ENCODE measurements at regions of chrX and their contacts with region 1.

Region 1: GRCh38 chrX:79270401-79270800 is 96.7 kb downstream of the ITM2A start:
- DNase-seq: peak; percentile 21
- CTCF ChIP-seq: peak; percentile 67

Region 2: GRCh38 chrX:78653118-78653822 is 617.1 kb before region 1 on chrX:
- in situ Hi-C with region 1: no loop called
- DNase-seq: no peak
- CTCF ChIP-seq: no peak

Region 3: DNA sequence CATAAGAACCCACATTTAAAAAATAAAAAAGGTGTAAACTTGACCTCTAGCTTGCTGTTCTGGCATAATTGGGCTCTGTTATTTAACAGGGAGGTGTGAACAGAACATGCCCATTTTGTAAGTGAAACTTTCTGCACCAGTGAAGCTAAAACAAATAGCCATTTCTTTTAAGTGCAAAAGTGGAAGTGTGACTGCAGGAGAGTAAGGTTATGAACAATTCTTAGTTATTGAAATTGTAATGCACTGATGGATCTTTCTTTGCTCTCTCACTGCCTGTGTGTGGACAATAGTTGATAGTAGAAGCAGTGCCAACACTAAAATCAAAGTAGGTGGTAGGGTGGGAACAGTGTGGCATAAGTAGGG is 312.7 kb before region 1 on chrX:
- in situ Hi-C with region 1: loop called (anchors 25 kb)
- DNase-seq: no peak
- CTCF ChIP-seq: no peak

Region 4: DNA sequence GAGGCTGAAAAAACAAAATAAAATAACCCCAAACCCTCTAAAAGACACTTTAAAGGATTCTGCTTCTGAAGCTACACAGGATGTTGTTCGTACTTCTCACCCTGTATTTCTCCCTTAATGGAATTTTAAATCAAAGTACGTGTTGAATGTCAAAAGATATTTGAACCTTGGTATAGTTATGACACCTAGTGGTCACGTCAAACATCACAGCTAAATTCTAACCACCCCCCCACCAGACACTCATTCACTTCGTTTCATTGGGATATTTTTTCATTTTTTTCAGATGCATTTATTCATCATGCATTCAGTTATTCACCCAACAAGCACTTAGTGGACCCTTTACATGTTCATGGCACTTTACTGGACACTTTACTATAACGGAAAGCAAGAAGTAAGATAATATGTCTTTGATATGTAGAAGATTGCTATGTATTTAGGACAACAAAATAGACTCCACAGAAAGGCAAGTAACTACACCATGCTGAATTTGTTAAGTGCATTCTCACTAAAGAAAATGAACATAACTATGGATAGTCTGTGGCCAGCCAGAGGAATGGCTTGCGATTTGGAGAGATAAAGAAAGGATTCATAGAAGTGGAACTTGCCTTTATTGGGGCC is 188.4 kb before region 1 on chrX:
- in situ Hi-C with region 1: loop called (anchors 10 kb)
- DNase-seq: peak; percentile 29
- CTCF ChIP-seq: peak; percentile 47

Region 5: DNA sequence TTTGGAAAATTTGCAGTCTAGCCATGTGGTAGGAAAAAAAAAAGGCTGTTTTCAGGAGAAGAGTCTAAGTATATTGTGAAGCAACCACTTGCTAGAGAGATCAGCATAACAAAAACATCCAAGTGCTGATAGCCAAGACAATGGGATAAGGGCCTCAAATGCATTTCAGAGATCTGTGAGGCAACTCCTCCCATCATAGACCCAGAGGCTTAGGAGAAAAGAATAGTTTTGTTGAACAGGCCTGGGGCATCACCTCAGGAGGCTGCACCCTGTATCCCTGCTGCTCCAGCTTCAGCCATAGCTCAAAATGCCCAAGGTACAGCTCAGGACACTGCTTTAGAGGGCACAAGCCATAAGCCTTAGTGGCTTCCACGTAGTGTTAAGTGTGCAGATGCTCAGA is 139.5 kb before region 1 on chrX:
- in situ Hi-C with region 1: no loop called
- DNase-seq: no peak
- CTCF ChIP-seq: no peak

Region 6: DNA sequence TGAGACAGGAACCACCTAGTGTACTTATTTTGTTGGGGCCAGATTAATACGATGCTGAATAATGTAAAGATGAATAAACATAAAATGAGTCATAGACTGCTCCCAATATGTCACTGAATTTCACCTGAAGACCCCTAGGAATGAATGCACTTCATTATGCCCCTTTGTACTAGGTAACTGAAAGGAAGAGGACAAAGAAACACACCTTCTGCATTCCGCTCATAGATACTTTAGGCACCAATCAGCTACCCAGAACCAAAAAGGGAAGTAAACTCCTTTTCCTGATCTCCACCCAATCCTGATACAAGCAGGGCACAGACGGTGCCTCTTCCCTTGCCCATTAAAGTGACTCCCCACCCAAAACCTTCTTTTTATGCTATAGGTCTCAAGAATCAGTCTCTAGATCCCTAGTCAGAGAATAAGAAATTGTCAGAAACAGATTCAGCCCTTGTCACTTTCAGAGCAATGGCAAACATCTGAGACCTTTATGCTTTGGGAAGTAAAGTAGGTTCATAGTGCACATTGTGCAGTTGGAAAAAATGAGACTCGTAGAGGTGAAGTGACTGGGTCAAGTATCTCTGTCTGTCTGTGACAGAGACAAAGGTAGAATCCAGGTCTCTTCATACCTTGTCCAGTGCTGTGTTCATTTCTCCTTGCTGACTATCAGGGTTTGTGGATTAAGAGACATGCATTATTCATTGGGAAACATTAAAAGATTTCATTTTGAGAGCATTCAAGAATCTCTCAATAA is 123.6 kb before region 1 on chrX:
- in situ Hi-C with region 1: no loop called
- DNase-seq: no peak
- CTCF ChIP-seq: no peak

Region 7: DNA sequence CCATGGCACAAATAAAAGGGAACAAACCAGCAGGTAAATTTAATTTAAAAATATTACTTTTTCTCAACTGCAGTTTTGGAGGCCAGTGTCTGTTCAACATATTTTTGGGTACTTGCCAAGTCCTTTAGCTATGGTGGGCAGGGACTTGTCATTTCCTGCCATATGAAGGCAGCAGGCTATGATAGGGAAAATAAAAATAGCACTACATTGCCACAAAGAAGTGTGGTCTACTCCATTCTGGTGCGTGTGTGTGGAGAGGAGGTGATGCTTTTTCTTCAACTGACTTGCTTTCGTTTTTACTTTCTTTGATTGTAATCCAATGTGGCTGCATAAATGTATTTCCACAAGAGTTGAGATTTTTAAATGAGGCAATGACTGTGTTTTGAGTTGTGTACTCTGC is 108.7 kb before region 1 on chrX:
- in situ Hi-C with region 1: loop called (anchors 10 kb)
- DNase-seq: peak; percentile 17
- CTCF ChIP-seq: no peak

Region 8: DNA sequence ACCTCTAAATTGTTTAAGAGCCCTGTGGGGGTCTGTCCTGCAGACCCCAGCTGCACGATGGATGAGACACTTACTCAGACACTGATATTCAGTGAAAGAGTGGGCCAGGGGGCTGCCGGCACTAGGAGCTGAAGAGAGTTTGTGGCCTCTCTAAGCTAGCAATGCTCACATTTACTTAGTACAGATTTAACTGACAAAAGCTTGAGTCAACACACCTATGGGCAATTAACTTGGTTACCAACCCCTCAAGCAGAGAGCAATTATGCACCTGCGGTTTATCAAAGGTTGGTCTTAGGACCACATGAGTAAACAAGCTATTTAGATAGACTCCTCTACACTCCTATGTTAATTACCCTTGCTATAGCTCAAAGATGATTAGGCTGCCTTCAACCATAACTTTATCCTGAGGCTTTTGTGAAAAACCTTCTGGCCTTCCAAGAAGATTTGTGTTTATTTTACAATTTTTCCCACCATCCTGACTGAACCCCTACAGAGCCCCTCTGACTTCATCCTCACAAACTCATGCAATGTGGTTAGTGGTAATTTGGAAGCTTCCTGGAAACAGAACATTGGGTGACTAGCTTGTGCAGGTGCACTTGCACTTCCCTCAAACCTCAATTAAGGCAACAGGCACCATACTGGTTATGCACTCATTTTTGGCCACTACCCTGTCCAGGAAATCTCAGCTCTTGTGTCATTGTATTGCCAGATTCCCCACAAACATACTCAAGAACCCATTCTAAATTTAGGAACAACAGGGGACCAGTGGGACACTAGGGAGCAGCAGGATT is 331.1 kb after region 1 on chrX:
- in situ Hi-C with region 1: no loop called
- DNase-seq: no peak
- CTCF ChIP-seq: no peak